ENCODE measurements at regions of chrX and their contacts with region 1.

Region 1: GRCh38 chrX:20066968-20067708 is 49.6 kb downstream of the MAP7D2 start:
- DNase-seq: no peak
- H3K4me3 Mint-ChIP-seq: no peak overlapping the region
- H3K27ac Mint-ChIP-seq: no peak overlapping the region
- H3K4me1 Mint-ChIP-seq: no peaks in the 10 kb centered on the region
- H3K27me3 Mint-ChIP-seq: peaks cover 5% of the 10 kb centered on the region

Region 2: DNA sequence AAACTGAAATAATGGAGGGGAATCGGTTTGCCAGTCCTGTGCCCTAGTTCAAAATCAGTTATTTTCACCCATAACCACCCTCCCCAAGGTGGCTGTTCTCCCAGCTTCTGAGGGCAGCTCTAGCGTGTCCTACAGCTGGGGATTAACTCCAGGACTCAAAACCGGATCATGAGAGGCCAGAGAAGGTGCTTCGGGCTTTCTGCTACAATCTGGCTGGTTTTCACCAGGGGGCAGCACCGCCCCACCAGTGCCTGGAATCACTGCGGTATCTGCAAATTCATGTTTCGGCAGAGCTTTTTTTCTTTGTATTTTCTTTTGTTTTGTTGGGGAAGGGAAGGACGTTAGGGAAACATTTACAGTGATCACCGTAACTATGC is 695.0 kb before region 1 on chrX:
- intact Hi-C with region 1: loop called (anchors 1 kb)
- DNase-seq: peak; percentile 34
- H3K4me3 Mint-ChIP-seq: peak overlapping the region; percentile 87
- H3K27ac Mint-ChIP-seq: peak overlapping the region; percentile 85
- H3K4me1 Mint-ChIP-seq: peaks cover 9% of the 10 kb centered on the region
- H3K27me3 Mint-ChIP-seq: peaks cover 2% of the 10 kb centered on the region

Region 3: DNA sequence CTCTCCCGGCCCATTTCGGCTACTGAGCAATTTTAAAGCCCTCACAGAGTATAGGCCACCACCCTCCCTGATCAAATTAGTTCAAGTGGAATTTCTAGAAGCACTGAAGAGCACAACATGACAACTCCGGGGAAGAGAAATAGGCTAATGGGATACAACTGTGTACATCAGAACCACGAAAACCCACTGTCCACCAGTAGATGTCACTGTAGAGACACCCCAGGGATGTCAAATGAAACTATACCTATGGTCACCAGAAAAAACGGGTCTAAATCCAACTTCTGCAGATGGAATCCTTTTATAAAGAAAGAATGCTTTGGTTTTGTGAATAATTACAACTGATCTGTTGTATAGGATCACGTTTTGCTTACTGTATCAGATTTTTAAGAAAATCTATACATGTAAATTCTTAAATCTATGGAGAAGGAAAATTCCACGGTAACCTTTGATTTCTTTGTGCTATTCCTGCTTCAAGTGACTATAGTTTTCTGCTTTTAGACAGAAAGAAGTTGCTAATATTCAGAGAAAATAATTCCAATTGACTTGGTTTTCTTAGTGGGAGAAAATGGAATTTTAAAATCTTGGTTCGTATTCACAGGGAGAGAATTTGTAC is 522.3 kb before region 1 on chrX:
- intact Hi-C with region 1: loop called (anchors 5 kb)
- DNase-seq: no peak
- H3K4me3 Mint-ChIP-seq: no peak overlapping the region
- H3K27ac Mint-ChIP-seq: peak overlapping the region; percentile 61
- H3K4me1 Mint-ChIP-seq: peaks cover 35% of the 10 kb centered on the region
- H3K27me3 Mint-ChIP-seq: no peaks in the 10 kb centered on the region

Region 4: GRCh38 chrX:19846995-19847790 is 219.9 kb before region 1 on chrX:
- intact Hi-C with region 1: loop called (anchors 5 kb)
- DNase-seq: no peak
- H3K4me3 Mint-ChIP-seq: peak overlapping the region; percentile 56
- H3K27ac Mint-ChIP-seq: peak overlapping the region; percentile 80
- H3K4me1 Mint-ChIP-seq: peaks cover 34% of the 10 kb centered on the region
- H3K27me3 Mint-ChIP-seq: no peaks in the 10 kb centered on the region

Region 5: DNA sequence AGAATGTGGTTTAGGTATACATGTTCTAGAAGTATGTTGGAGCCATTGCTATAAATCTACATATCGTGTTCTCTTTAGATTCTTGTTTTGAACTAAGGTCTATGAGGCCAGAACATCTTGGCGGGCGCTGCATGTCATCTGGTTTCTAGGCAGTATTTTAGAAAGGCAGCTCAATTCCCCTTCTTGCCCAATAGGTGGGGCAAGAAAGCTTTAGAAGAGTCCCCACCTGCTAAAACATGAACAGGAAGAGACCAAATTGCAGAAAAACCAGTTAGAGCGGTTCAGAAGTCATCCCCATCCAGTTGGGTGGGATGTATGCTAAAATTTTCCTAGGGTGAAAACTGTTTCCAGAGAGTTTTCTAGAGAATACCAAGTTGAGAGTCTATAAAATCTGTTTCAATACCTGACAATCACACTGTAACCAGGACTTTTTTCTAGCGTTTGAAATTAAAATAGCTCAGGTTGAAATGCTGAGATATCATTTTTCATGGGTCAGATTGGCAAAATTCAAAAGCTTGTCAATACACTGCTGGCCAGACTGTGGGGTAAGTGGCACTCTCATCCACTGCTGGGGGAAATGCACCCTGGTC is 162.3 kb before region 1 on chrX:
- intact Hi-C with region 1: loop called (anchors 1 kb)
- DNase-seq: no peak
- H3K4me3 Mint-ChIP-seq: no peak overlapping the region
- H3K27ac Mint-ChIP-seq: no peak overlapping the region
- H3K4me1 Mint-ChIP-seq: peaks cover 19% of the 10 kb centered on the region
- H3K27me3 Mint-ChIP-seq: no peaks in the 10 kb centered on the region

Measured in activated T-helper 1 cell treated with anti-CD3 and anti-CD28 coated beads, Interleukin-12 subunit alpha, Interleukin-12 subunit beta, Interleukin-2, Interleukin-4 antibody, amounts not matched to agents 30 ng/mL and 10 ng/mL and 1 ng/mL, durations not matched to agents 14 hours and 24 hours and 36 hours (primary cell).